Activated CD4-positive, alpha-beta memory T cell treated with anti-CD3 and anti-CD28 coated beads for 36 hours (primary cell): ENCODE measurements at regions of chr2 and their contacts with region 1.

Region 1: GRCh38 chr2:181891966-181892798 is 652 bp downstream of the ITPRID2 start:
- DNase-seq: peak; percentile 68
- H3K4me3 Mint-ChIP-seq: peak overlapping the region; percentile 96
- H3K27ac Mint-ChIP-seq: peak overlapping the region; percentile 77
- H3K4me1 Mint-ChIP-seq: peaks cover 23% of the 10 kb centered on the region
- H3K27me3 Mint-ChIP-seq: peaks cover 7% of the 10 kb centered on the region

Region 2: GRCh38 chr2:180006781-180007579 is 1885.2 kb before region 1 on chr2 and contains the start of gene CWC22:
- CTCF ChIA-PET with region 1: no interaction called
- POLR2A ChIA-PET with region 1: no interaction called
- intact Hi-C with region 1: loop called (anchors 5 kb)
- DNase-seq: peak; percentile 90
- H3K4me3 Mint-ChIP-seq: peak within 1 kb of the TSS; percentile 88
- H3K27ac Mint-ChIP-seq: peak within 1 kb of the TSS; percentile 99
- H3K4me1 Mint-ChIP-seq: peaks cover 38% of the 10 kb centered on the region
- H3K27me3 Mint-ChIP-seq: no peaks in the 10 kb centered on the region
- total RNA-seq, gene CWC22: 21.1 to 23.6 TPM

Region 3: DNA sequence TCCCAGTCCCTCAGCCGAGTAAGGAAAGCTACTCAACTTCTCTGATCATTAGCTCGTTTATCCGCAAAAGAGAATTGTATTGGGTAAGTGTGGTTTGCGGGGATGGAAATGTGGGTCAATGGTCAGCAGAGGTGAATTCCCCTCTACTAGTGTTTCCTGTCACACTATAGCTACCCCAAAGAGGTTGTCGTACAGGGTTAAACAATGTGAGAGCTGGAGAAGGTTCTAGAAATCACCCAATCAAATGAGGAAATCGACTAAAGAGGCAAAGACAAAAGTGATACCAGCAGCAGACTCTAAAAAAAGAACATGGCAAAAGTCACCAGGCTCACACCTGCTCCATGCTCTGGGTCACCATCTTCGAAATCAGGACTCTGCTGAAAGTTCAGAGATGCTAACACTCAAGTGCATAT is 579.7 kb before region 1 on chr2:
- CTCF ChIA-PET with region 1: no interaction called
- POLR2A ChIA-PET with region 1: no interaction called
- intact Hi-C with region 1: loop called (anchors 5 kb)
- DNase-seq: peak; percentile 68
- H3K4me3 Mint-ChIP-seq: peak overlapping the region; percentile 65
- H3K27ac Mint-ChIP-seq: peak overlapping the region; percentile 87
- H3K4me1 Mint-ChIP-seq: peaks cover 43% of the 10 kb centered on the region
- H3K27me3 Mint-ChIP-seq: no peaks in the 10 kb centered on the region

Region 4: GRCh38 chr2:181790716-181791649 is 101.2 kb before region 1 on chr2:
- CTCF ChIA-PET with region 1: no interaction called
- POLR2A ChIA-PET with region 1: no interaction called
- intact Hi-C with region 1: loop called (anchors 1 kb)
- DNase-seq: peak; percentile 52
- H3K4me3 Mint-ChIP-seq: no peak overlapping the region
- H3K27ac Mint-ChIP-seq: peak overlapping the region; percentile 46
- H3K4me1 Mint-ChIP-seq: peaks cover 19% of the 10 kb centered on the region
- H3K27me3 Mint-ChIP-seq: peaks cover 12% of the 10 kb centered on the region

Region 5: GRCh38 chr2:181844551-181845290 is 47.5 kb before region 1 on chr2:
- CTCF ChIA-PET with region 1: no interaction called
- POLR2A ChIA-PET with region 1: no interaction called
- intact Hi-C with region 1: no loop called
- DNase-seq: no peak
- H3K4me3 Mint-ChIP-seq: no peak overlapping the region
- H3K27ac Mint-ChIP-seq: no peak overlapping the region
- H3K4me1 Mint-ChIP-seq: no peaks in the 10 kb centered on the region
- H3K27me3 Mint-ChIP-seq: peaks cover 8% of the 10 kb centered on the region

Region 6: DNA sequence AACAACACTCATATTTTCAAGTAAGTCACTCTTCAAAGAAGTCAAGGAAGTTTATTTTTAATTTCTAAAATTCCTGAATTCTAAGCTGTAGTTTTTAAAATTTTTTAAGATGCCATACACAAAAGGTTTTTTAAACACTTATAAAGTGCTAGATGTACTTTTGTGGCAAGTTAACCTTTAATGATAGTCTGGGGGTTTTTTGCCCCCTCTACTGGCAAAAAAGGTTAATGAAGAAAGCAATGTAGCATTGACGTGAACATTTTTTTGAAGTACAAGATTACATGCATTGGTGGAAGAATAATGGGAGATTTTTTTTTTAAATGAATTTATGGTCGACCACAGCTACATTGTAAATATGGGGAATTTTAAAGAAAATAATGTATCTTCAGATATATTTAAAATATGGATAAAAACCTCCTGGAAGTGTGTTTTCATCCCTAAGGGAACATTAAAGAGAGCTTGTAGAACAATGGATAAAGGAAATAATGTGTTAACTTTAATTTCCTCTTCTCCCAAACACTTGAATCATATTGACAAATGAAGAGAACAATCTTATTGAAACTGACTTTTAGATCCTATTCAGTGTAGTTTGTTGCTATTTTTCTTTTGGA is 11.9 kb after region 1 on chr2:
- CTCF ChIA-PET with region 1: interaction called, 10 read pairs
- POLR2A ChIA-PET with region 1: interaction called, 6 read pairs
- intact Hi-C with region 1: loop called (anchors 1 kb)
- DNase-seq: no peak
- H3K4me3 Mint-ChIP-seq: no peak overlapping the region
- H3K27ac Mint-ChIP-seq: no peak overlapping the region
- H3K4me1 Mint-ChIP-seq: peaks cover 13% of the 10 kb centered on the region
- H3K27me3 Mint-ChIP-seq: no peaks in the 10 kb centered on the region